Right ventricle myocardium inferior (tissue), 1 donor: ENCODE measurements at regions of chr16 and their contacts with region 1.

Region 1: DNA sequence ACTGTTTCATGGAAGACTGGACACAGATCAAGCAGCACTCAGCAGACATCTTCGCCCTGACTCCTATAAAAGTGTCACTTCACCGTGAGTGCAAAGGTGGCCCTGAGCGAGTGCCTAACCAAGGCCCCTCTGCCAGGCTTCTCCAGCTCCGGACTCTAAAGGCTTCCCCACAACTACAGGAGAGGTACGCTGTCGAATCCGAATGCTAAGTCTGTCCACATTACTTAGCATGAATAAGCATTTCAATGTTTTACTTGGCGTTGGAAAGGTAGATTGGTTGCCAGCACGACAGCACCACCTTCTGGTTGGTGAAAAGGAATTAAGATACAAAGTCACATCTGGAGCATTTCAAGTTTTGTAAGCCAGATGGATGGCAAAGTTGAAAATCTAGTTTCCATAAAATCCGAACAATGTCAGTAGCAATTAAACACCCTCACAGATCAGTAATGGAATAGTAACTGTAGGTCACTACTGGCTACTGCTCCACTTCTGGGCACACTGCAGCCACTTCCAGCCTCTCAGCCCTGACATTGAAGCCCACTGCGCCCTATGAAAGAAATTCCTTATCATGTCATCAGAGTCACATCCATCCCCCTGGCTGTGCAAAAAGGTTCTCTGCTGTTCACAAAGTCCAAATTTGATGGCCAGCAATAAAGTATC is 100.9 kb downstream of the PARN start:
- DNase-seq: no peak
- ATAC-seq: peak; percentile 83

Region 2: DNA sequence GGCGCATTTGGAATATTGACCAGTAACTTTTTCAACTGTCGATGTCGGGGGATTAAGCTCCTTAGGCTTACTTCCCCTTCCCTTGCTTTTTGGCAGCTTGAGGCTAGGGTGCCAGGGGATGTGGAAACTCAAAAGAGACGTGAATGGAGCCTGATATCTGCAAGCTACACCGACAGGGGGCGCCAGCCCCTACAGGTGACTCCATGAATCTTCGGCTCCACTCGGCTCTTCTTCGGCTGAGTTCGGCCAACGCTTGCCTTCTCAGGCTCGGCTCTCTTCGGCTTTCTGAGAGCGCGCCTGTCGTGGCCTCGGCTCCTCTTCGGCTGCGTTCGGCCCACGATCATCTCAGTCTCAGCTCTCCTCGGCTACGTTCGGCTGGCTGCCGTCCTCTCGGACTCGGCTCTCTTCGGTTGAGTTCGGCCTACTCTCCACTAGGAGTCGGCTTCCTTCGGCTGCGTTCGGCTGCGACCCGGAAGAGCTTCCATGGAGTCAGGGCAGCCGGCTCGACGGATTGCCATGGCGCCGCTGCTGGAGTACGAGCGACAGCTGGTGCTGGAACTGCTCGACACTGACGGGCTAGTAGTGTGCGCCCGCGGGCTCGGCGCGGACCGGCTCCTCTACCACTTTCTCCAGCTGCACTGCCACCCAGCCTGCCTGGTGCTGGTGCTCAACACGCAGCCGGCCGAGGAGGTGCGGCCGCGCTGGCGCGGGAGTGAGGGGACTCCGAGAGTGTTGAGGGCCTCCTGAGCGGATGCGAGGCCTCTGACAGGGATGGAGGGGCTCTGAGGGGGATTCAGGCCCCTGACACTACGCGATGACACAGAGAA is 609.2 kb before region 1 on chr16 and contains the start of gene ERCC4:
- intact Hi-C with region 1: loop called (anchors 5 kb)
- DNase-seq: peak; percentile 100
- ATAC-seq: peak; percentile 99
- total RNA-seq, gene ERCC4: 7.2 TPM

Region 3: GRCh38 chr16:14070877-14071575 is 458.1 kb before region 1 on chr16 and contains the start of gene MRTFB:
- intact Hi-C with region 1: loop called (anchors 10 kb)
- DNase-seq: peak; percentile 89
- ATAC-seq: peak; percentile 89
- total RNA-seq, gene MRTFB: 23.8 TPM

Region 4: GRCh38 chr16:14249291-14250032 is 279.7 kb before region 1 on chr16:
- intact Hi-C with region 1: loop called (anchors 2 kb)
- DNase-seq: no peak
- ATAC-seq: no peak

Region 5: GRCh38 chr16:14285513-14286385 is 243.4 kb before region 1 on chr16:
- intact Hi-C with region 1: loop called (anchors 5 kb)
- DNase-seq: peak; percentile 94
- ATAC-seq: peak; percentile 93

Region 6: DNA sequence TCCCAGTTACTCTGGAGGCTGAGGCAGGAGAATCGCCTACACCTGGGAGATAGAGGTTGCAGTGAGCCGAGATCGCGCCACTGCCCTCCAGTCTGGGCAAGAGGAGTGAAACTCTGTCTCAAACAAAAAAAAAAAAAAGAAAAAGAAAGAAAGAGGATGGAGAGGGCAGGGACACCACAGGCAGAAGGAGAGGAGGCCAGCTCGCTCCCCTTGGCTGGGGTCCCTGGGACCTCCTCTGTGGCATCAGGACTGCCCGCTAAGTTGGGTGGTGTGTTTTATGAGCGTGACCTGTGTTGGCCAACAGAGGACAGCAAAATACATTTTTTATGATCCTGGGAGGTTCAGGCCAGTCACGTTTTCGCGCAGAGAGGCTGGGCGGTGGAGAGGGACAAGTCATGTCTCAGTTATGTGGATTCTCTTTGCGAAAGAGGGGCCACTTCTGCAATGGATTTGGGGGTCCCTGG is 228.4 kb before region 1 on chr16:
- intact Hi-C with region 1: loop called (anchors 1 kb)
- DNase-seq: peak; percentile 79
- ATAC-seq: peak; percentile 82

Region 7: GRCh38 chr16:14486520-14487303 is 42.4 kb before region 1 on chr16:
- intact Hi-C with region 1: loop called (anchors 2 kb)
- DNase-seq: peak; percentile 78
- ATAC-seq: peak; percentile 84